Activated naive CD4-positive, alpha-beta T cell treated with anti-CD3 and anti-CD28 coated beads for 36 hours (primary cell): ENCODE measurements at regions of chr4 and their contacts with region 1.

Region 1: GRCh38 chr4:87103691-87104187 is 116.7 kb downstream of the KLHL8 start:
- DNase-seq: no peak
- H3K4me3 Mint-ChIP-seq: peak overlapping the region; percentile 3
- H3K27ac Mint-ChIP-seq: peak overlapping the region; percentile 92
- H3K4me1 Mint-ChIP-seq: peaks cover 62% of the 10 kb centered on the region
- H3K27me3 Mint-ChIP-seq: no peaks in the 10 kb centered on the region

Region 2: GRCh38 chr4:86544310-86544966 is 559.3 kb before region 1 on chr4:
- CTCF ChIA-PET with region 1: no interaction called
- intact Hi-C with region 1: loop called (anchors 1 kb)
- DNase-seq: no peak
- H3K4me3 Mint-ChIP-seq: no peak overlapping the region
- H3K27ac Mint-ChIP-seq: no peak overlapping the region
- H3K4me1 Mint-ChIP-seq: peaks cover 15% of the 10 kb centered on the region
- H3K27me3 Mint-ChIP-seq: peaks cover 10% of the 10 kb centered on the region

Region 3: DNA sequence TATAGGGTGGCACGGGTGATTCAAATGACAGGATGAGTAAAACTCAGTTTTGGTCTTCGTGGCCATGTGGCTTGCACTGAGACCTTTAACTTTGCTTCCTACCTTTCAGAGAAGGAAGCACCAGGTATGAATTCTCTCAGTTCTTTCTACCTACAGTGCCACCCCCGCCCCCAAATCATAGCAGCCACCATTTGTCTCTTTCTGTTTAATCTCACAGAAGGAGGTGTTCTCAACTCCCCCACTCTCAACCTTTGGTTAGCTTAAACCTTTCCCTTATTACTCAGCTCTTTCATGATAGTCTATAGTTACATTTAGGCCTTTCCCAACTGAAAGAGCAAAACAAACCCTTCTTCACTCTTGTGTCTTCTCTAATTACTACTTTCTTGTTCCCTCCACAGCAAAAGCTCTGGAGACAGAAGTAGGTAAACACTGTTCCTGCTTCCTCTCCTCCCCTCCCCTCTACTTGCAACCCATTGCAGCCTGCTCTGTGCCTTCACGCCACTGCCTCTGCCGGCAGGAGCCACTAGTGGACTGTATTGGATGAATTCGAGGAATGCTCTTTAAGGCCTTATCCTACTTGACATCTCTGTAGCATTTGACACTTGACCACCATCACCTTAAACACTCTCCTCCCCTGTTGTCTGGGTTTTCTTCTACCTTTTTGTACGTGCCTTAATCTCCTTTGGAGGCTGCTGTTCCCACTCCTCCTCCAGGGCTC is 45.2 kb before region 1 on chr4:
- CTCF ChIA-PET with region 1: no interaction called
- intact Hi-C with region 1: loop called (anchors 1 kb)
- DNase-seq: peak; percentile 68
- H3K4me3 Mint-ChIP-seq: peak overlapping the region; percentile 2
- H3K27ac Mint-ChIP-seq: peak overlapping the region; percentile 24
- H3K4me1 Mint-ChIP-seq: peaks cover 51% of the 10 kb centered on the region
- H3K27me3 Mint-ChIP-seq: no peaks in the 10 kb centered on the region

Region 4: GRCh38 chr4:87093443-87094123 is 10.2 kb before region 1 on chr4:
- CTCF ChIA-PET with region 1: interaction called, 9 read pairs
- intact Hi-C with region 1: loop called (anchors 1 kb)
- DNase-seq: peak; percentile 66
- H3K4me3 Mint-ChIP-seq: no peak overlapping the region
- H3K27ac Mint-ChIP-seq: peak overlapping the region; percentile 53
- H3K4me1 Mint-ChIP-seq: peaks cover 44% of the 10 kb centered on the region
- H3K27me3 Mint-ChIP-seq: no peaks in the 10 kb centered on the region

Region 5: GRCh38 chr4:87179751-87180150 is 76.0 kb after region 1 on chr4:
- CTCF ChIA-PET with region 1: no interaction called
- intact Hi-C with region 1: no loop called
- DNase-seq: no peak
- H3K4me3 Mint-ChIP-seq: no peak overlapping the region
- H3K27ac Mint-ChIP-seq: peak overlapping the region; percentile 51
- H3K4me1 Mint-ChIP-seq: no peaks in the 10 kb centered on the region
- H3K27me3 Mint-ChIP-seq: no peaks in the 10 kb centered on the region

Region 6: DNA sequence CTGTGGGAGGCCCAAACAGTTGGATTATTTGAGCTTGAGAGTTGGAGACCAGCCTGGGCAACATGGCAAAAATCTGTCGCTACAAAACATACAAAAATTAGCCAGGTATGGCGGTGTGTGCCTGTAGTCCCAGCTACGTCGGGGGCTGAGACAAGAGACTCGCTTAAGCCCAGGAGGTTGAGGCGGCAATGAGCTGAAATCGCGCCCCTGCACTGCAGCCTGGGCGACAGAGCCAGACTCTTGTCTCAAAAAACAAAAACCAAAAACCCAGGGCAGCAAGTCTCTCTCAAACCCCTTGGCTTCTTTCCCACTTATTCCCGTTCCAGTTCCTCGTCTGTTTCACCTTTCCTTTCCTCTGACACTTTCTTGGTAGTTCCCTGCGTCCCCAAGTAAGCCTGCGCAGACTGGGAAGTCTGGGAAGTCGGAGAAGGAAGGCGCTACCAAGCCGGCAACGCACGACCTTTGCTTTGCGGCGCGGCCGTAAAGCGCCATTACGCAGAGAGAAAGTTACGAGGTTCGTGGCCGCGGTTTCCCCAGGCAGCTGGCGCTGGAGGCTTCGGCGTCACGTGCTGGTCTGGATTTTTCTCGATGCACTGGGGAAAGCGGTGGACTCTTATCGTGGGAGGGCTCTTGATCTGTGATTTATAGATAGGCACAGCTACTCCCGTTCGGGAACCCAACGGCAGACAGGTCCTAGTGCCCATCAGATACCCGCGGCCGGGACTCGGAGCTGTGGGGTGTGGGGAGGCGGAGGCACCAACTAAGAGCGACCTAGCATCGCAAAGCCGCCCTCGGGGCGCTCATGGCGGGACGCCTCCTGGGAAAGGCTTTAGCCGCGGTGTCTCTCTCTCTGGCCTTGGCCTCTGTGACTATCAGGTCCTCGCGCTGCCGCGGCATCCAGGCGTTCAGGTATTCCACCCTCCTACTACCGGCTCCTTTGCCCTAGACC is 318.6 kb after region 1 on chr4 and contains the start of gene NUDT9:
- CTCF ChIA-PET with region 1: no interaction called
- intact Hi-C with region 1: loop called (anchors 5 kb)
- DNase-seq: peak; percentile 91
- H3K4me3 Mint-ChIP-seq: peak within 1 kb of the TSS; percentile 98
- H3K27ac Mint-ChIP-seq: peak within 1 kb of the TSS; percentile 97
- H3K4me1 Mint-ChIP-seq: peaks cover 32% of the 10 kb centered on the region
- H3K27me3 Mint-ChIP-seq: no peaks in the 10 kb centered on the region
- total RNA-seq, gene NUDT9: 12.1 to 13.4 TPM